IMR-90 (cell line): ENCODE measurements at regions of chr4 and their contacts with region 1.

Region 1: DNA sequence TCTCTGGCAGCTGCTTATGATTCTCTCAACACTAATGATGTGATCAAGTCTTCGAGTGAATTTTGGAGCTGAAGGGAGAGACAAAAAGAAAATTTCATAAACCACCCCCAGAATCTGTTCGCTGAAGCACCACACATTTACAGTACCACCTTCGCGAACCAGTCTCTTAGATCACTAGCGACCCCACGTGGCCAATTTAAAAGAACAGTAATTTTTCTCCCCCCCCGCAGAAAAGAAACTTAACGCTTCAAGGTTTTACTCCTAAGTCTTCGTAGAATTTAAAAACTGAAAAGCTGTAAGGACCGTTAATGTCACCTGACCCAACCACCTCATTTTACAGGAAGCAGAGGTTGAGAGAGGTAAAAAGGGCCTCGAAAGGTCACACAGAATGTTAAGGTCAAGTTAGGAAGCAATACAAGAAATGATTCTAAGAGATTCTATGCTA is 187.5 kb downstream of the QDPR start:
- DNase-seq: peak; percentile 77
- ATAC-seq: peak; percentile 86
- H3K4me3 ChIP-seq: no peak overlapping the region; the same call in 1 of the 2 replicates
- H3K27ac ChIP-seq: peak overlapping the region; percentile 73; the same call in 1 of the 2 replicates
- H3K4me1 ChIP-seq: peaks cover 4% of the 10 kb centered on the region; the same call in 1 of the 2 replicates
- H3K27me3 ChIP-seq: no peaks in the 10 kb centered on the region
- CTCF ChIP-seq: peak; percentile 89
- POLR2A ChIP-seq: peak; percentile 42; the same call in 1 of the 2 replicates
- RAD21 ChIP-seq: peak; percentile 94

Region 2: DNA sequence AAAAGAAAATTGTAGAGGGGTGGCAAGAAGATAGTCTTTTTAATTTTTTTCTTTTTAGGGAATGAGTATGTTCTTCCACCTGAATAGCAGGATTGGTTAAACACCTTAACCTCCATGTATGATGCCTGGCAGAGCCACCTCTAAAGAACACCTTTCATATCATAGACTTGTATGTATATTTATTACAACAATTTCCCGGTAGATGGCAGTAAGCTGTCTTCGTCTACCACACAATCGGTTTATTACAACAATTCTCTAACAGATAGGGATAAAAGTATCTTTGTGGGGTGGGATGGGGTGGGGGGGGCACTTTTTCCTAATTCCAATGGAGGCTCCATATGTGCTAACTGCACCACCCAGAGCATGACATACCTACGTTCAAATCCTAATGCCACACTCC is 681.5 kb before region 1 on chr4:
- CTCF ChIA-PET with region 1: interaction called, 4 read pairs
- POLR2A ChIA-PET with region 1: no interaction called
- dilution Hi-C with region 1: no loop called
- in situ Hi-C with region 1: loop called (anchors 10 kb)
- intact Hi-C with region 1: loop called (anchors 2 kb)
- DNase-seq: no peak
- ATAC-seq: no peak; the same call in 1 of the 2 replicates
- H3K4me3 ChIP-seq: no peak overlapping the region
- H3K27ac ChIP-seq: no peak overlapping the region
- H3K4me1 ChIP-seq: no peaks in the 10 kb centered on the region
- H3K27me3 ChIP-seq: no peaks in the 10 kb centered on the region
- CTCF ChIP-seq: 0 out of 2 replicates have a peak, but pooled peaks have one; percentile 26
- POLR2A ChIP-seq: no peak
- RAD21 ChIP-seq: peak; percentile 36; the same call in 1 of the 2 replicates

Region 3: DNA sequence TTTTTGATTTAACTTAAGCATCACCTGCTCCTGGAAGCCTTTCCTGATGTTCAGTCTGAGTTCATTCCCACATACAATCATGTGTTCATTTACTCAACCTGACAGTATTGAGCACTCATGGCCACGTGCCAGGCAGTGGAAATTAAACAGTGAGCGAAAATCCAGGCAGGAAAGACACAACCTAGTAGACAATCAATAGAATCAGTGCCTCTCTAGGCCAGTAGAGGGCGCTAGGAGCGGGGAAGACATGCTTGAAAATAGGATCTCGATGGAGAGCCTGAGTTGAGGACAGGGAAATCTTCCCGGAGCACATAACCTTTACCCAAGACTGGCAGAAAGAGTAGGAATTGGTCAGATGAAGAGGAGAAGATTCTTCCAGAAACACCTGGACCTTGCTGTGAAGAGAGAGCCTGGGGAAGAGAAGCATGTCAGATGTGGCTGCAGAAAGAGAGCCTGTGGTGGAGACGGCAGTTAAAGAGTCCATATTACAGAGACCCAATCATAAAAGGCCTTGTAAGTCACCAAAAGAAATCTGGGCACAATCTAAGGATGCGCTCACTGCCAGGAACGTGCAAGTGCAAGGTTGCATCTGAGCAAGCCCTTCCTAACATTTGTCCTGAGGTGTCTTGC is 529.5 kb before region 1 on chr4:
- CTCF ChIA-PET with region 1: interaction called, 13 read pairs
- POLR2A ChIA-PET with region 1: no interaction called
- dilution Hi-C with region 1: no loop called
- in situ Hi-C with region 1: loop called (anchors 5 kb)
- intact Hi-C with region 1: loop called (anchors 1 kb)
- DNase-seq: peak; percentile 60
- ATAC-seq: peak; percentile 80
- H3K4me3 ChIP-seq: no peak overlapping the region
- H3K27ac ChIP-seq: no peak overlapping the region
- H3K4me1 ChIP-seq: no peaks in the 10 kb centered on the region
- H3K27me3 ChIP-seq: no peaks in the 10 kb centered on the region
- CTCF ChIP-seq: peak; percentile 84
- POLR2A ChIP-seq: no peak
- RAD21 ChIP-seq: peak; percentile 91

Region 4: DNA sequence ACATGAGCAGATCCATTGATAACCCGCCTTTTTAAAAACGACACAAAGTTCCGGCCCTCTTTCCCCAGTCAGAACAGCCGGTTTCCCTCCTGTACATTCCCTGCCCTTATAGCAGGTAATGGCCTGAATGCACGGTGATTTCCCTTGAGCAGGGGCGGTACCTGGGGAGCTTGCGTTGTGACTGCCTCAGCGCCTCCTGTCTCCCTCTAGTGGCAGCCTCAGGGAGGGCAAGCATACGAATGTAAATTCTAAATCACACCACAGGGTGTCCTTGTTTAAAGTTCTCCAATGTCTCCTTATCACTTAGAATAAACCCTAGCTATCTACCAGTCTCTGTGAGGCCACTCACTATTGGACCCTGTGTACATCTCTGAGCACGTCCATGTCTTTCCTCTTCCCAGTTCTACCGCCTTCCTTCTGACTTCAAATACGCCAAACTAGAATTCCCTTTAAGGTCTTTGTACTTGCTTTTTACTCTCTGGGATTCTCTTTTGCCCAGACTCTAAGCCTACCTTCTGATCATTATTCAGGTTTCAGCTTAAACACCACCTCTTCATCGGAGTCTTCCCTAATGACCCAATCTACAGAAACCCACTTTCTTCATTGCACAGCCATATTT is 407.6 kb before region 1 on chr4:
- CTCF ChIA-PET with region 1: interaction called, 4 read pairs
- POLR2A ChIA-PET with region 1: no interaction called
- dilution Hi-C with region 1: no loop called
- in situ Hi-C with region 1: loop called (anchors 25 kb)
- intact Hi-C with region 1: loop called (anchors 1 kb)
- DNase-seq: no peak
- ATAC-seq: no peak
- H3K4me3 ChIP-seq: no peak overlapping the region
- H3K27ac ChIP-seq: no peak overlapping the region
- H3K4me1 ChIP-seq: peaks cover 3% of the 10 kb centered on the region; the same call in 1 of the 2 replicates
- H3K27me3 ChIP-seq: no peaks in the 10 kb centered on the region
- CTCF ChIP-seq: peak; percentile 57
- POLR2A ChIP-seq: no peak
- RAD21 ChIP-seq: peak; percentile 43

Region 5: GRCh38 chr4:17103231-17103630 is 221.2 kb before region 1 on chr4:
- CTCF ChIA-PET with region 1: no interaction called
- POLR2A ChIA-PET with region 1: no interaction called
- dilution Hi-C with region 1: no loop called
- in situ Hi-C with region 1: no loop called
- intact Hi-C with region 1: loop called (anchors 2 kb)
- DNase-seq: peak; percentile 95
- ATAC-seq: peak; percentile 94
- H3K4me3 ChIP-seq: no peak overlapping the region
- H3K27ac ChIP-seq: no peak overlapping the region
- H3K4me1 ChIP-seq: no peaks in the 10 kb centered on the region
- H3K27me3 ChIP-seq: no peaks in the 10 kb centered on the region
- CTCF ChIP-seq: no peak
- POLR2A ChIP-seq: no peak
- RAD21 ChIP-seq: peak; percentile 21; the same call in 1 of the 2 replicates

Region 6: GRCh38 chr4:17276776-17277175 is 47.6 kb before region 1 on chr4:
- CTCF ChIA-PET with region 1: no interaction called
- POLR2A ChIA-PET with region 1: no interaction called
- dilution Hi-C with region 1: no loop called
- in situ Hi-C with region 1: no loop called
- intact Hi-C with region 1: no loop called
- DNase-seq: peak; percentile 53
- ATAC-seq: peak; percentile 91
- H3K4me3 ChIP-seq: no peak overlapping the region
- H3K27ac ChIP-seq: no peak overlapping the region
- H3K4me1 ChIP-seq: peaks cover 1% of the 10 kb centered on the region; the same call in 1 of the 2 replicates
- H3K27me3 ChIP-seq: no peaks in the 10 kb centered on the region
- CTCF ChIP-seq: no peak
- POLR2A ChIP-seq: no peak
- RAD21 ChIP-seq: no peak